Stomach (tissue), 19 donors: ENCODE measurements at regions of chr20 and their contacts with region 1.

Region 1: GRCh38 chr20:17617551-17618223 is 47.8 kb downstream of the DSTN start:
- DNase-seq: peak; percentile 81 to 83
- H3K4me3 ChIP-seq: no peak overlapping the region
- H3K27ac ChIP-seq: peak overlapping the region in 3 of 5 donors; percentile 23 to 85 (median 40)
- H3K4me1 ChIP-seq: peaks cover 39 to 63% (median 55%) of the 10 kb centered on the region in 4 donors
- H3K27me3 ChIP-seq: no peaks in the 10 kb centered on the region
- CTCF ChIP-seq: peak in 5 of 7 experiments; percentile 60 to 92 (median 69)
- EP300 ChIP-seq: no peak
- POLR2A ChIP-seq: no peak

Region 2: DNA sequence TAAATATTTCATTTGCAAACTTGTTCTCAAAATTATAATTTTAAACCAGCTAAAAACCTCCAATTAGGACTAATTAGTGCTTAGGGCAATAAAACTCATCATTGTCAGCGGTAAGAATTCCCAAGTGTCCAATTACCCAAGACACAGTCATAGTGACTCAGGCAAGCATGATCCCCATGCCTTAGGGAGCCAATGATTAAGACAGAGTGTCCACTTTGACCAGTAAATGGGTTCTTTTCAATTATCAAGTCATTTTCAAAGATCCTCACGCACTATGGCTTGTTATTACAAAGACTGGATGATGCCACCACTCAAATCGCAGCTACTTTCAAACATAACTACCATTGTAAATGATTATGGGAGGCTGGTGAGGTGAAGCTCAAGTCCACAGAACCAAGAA is 200.5 kb before region 1 on chr20:
- intact Hi-C with region 1: no loop called
- DNase-seq: no peak
- H3K4me3 ChIP-seq: no peak overlapping the region
- H3K27ac ChIP-seq: no peak overlapping the region
- H3K4me1 ChIP-seq: no peaks in the 10 kb centered on the region
- H3K27me3 ChIP-seq: peaks cover 0 to 7% (median 0%) of the 10 kb centered on the region in 3 donors
- CTCF ChIP-seq: no peak
- EP300 ChIP-seq: no peak
- POLR2A ChIP-seq: no peak

Region 3: GRCh38 chr20:17536944-17537444 is 80.7 kb before region 1 on chr20:
- intact Hi-C with region 1: loop called (anchors 5 kb)
- DNase-seq: peak; percentile 76 to 92
- H3K4me3 ChIP-seq: no peak overlapping the region
- H3K27ac ChIP-seq: peak overlapping the region in 2 of 5 donors; percentile 11 to 36
- H3K4me1 ChIP-seq: peaks cover 0 to 17% (median 7%) of the 10 kb centered on the region in 4 donors
- H3K27me3 ChIP-seq: no peaks in the 10 kb centered on the region
- CTCF ChIP-seq: peak in 6 of 7 experiments; percentile 82 to 99 (median 89)
- EP300 ChIP-seq: no peak
- POLR2A ChIP-seq: no peak